Endothelial cell of umbilical vein (primary cell): ENCODE measurements at regions of chr16 and their contacts with region 1.

Region 1: GRCh38 chr16:27235055-27235937 is 32.0 kb downstream of the KDM8 start:
- DNase-seq: peak; percentile 96
- H3K4me3 ChIP-seq: no peak overlapping the region
- H3K27ac ChIP-seq: peak overlapping the region; percentile 99
- H3K4me1 ChIP-seq: peaks cover 56% of the 10 kb centered on the region
- H3K27me3 ChIP-seq: no peaks in the 10 kb centered on the region
- CTCF ChIP-seq: peak; percentile 86 to 94
- POLR2A ChIP-seq: no peak

Region 2: DNA sequence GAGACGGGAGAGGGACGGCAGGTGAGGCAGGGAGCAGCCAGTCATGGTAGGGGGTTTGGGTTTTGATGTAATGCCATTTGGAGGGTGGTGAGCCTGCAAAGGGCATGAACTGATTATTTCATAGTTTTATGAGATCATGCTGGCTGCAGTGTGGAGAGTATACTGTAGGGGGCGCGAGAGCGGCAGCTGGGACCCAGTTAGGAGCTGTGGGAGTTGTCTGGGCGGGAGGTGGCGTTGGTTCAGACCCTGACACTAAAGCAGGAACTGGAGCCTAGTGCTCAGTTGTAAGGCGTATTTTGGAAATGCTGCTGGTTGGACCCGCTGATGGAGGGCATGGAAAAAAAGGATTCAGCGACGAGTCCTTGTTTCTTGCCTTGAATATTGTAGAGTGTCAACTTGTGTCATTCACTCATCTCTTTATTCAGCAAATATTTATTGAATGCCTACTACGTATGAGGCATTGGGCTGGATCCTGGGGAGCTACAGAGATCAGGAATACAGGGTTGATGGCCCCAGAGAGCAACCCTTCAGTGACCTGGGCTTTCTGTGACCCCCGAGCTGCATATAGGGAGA is 55.7 kb before region 1 on chr16:
- CTCF ChIA-PET with region 1: interaction called, 35 read pairs
- POLR2A ChIA-PET with region 1: no interaction called
- dilution Hi-C with region 1: no loop called
- intact Hi-C with region 1: loop called (anchors 1 kb)
- DNase-seq: peak; percentile 77
- H3K4me3 ChIP-seq: no peak overlapping the region
- H3K27ac ChIP-seq: no peak overlapping the region
- H3K4me1 ChIP-seq: peaks cover 18% of the 10 kb centered on the region
- H3K27me3 ChIP-seq: peaks cover 10% of the 10 kb centered on the region in 2 experiments
- CTCF ChIP-seq: peak; percentile 94 to 97
- POLR2A ChIP-seq: no peak

Region 3: GRCh38 chr16:27253526-27253930 is 18.2 kb after region 1 on chr16:
- CTCF ChIA-PET with region 1: interaction called, 28 read pairs
- POLR2A ChIA-PET with region 1: interaction called, 6 read pairs
- dilution Hi-C with region 1: no loop called
- intact Hi-C with region 1: loop called (anchors 1 kb)
- DNase-seq: peak; percentile 83
- H3K4me3 ChIP-seq: no peak overlapping the region
- H3K27ac ChIP-seq: peak overlapping the region; percentile 48
- H3K4me1 ChIP-seq: peaks cover 48% of the 10 kb centered on the region
- H3K27me3 ChIP-seq: no peaks in the 10 kb centered on the region
- CTCF ChIP-seq: no peak
- POLR2A ChIP-seq: no peak

Region 4: GRCh38 chr16:27313422-27314160 is 78.3 kb after region 1 on chr16 and contains the start of gene IL4R:
- CTCF ChIA-PET with region 1: interaction called, 42 read pairs
- POLR2A ChIA-PET with region 1: interaction called, 4 read pairs
- dilution Hi-C with region 1: no loop called
- intact Hi-C with region 1: loop called (anchors 1 kb)
- DNase-seq: peak; percentile 59
- H3K4me3 ChIP-seq: peak within 1 kb of the TSS; percentile 78 to 95 (median 86)
- H3K27ac ChIP-seq: peak within 1 kb of the TSS; percentile 99
- H3K4me1 ChIP-seq: peaks cover 46% of the 10 kb centered on the region
- H3K27me3 ChIP-seq: no peaks in the 10 kb centered on the region
- CTCF ChIP-seq: no peak
- POLR2A ChIP-seq: no peak
- total RNA-seq, gene IL4R: 139 and 150 TPM in 2 replicates

Region 5: DNA sequence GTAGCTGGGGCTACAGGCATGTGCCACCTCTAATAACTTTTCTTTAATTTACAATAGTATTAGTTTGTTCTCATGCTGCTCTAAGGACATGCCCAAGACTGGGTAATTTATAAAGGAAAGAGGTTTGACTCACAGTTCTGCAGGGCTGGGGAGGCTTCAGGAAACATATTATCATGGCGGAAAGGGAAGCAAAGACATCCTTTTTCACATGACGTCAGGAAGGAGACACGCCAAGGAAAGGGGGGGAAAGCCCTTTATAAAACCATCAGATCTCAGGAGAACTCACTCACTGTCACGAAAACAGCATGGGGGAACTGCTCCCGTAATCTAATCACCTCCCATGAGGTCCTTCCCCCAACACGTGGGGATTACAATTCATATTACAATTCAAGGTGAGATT is 96.8 kb after region 1 on chr16:
- CTCF ChIA-PET with region 1: interaction called, 19 read pairs
- POLR2A ChIA-PET with region 1: interaction called, 4 read pairs
- dilution Hi-C with region 1: no loop called
- intact Hi-C with region 1: loop called (anchors 1 kb)
- DNase-seq: peak; percentile 97
- H3K4me3 ChIP-seq: no peak overlapping the region
- H3K27ac ChIP-seq: peak overlapping the region; percentile 84
- H3K4me1 ChIP-seq: peaks cover 52% of the 10 kb centered on the region
- H3K27me3 ChIP-seq: no peaks in the 10 kb centered on the region
- CTCF ChIP-seq: no peak
- POLR2A ChIP-seq: peak; percentile 54

Region 6: GRCh38 chr16:27355610-27356009 is 120.3 kb after region 1 on chr16:
- CTCF ChIA-PET with region 1: interaction called, 67 read pairs
- POLR2A ChIA-PET with region 1: interaction called, 3 read pairs
- dilution Hi-C with region 1: no loop called
- intact Hi-C with region 1: loop called (anchors 1 kb)
- DNase-seq: peak; percentile 46
- H3K4me3 ChIP-seq: no peak overlapping the region
- H3K27ac ChIP-seq: no peak overlapping the region
- H3K4me1 ChIP-seq: peaks cover 7% of the 10 kb centered on the region
- H3K27me3 ChIP-seq: no peaks in the 10 kb centered on the region
- CTCF ChIP-seq: peak; percentile 44 to 58
- POLR2A ChIP-seq: no peak

Region 7: GRCh38 chr16:27461483-27462171 is 226.3 kb after region 1 on chr16:
- CTCF ChIA-PET with region 1: interaction called, 4 read pairs
- POLR2A ChIA-PET with region 1: no interaction called
- dilution Hi-C with region 1: no loop called
- intact Hi-C with region 1: loop called (anchors 1 kb)
- DNase-seq: peak; percentile 69
- H3K4me3 ChIP-seq: no peak overlapping the region
- H3K27ac ChIP-seq: peak overlapping the region; percentile 61
- H3K4me1 ChIP-seq: peaks cover 16% of the 10 kb centered on the region
- H3K27me3 ChIP-seq: no peaks in the 10 kb centered on the region
- CTCF ChIP-seq: no peak
- POLR2A ChIP-seq: no peak